GM23248 (cell line): ENCODE measurements at regions of chr2 and their contacts with region 1.

Region 1: GRCh38 chr2:177164584-177165052 is 48.0 kb upstream of the HNRNPA3 start:
- DNase-seq: peak; percentile 91
- H3K4me3 ChIP-seq: peak overlapping the region; percentile 73
- H3K27ac ChIP-seq: peak overlapping the region; percentile 72
- H3K4me1 ChIP-seq: peaks cover 32% of the 10 kb centered on the region
- H3K27me3 ChIP-seq: no peaks in the 10 kb centered on the region

Region 2: GRCh38 chr2:176415937-176416499 is 748.6 kb before region 1 on chr2:
- in situ Hi-C with region 1: no loop called
- DNase-seq: no peak
- H3K4me3 ChIP-seq: no peak overlapping the region
- H3K27ac ChIP-seq: no peak overlapping the region
- H3K4me1 ChIP-seq: peaks cover 27% of the 10 kb centered on the region
- H3K27me3 ChIP-seq: no peaks in the 10 kb centered on the region

Region 3: GRCh38 chr2:177325270-177325929 is 160.8 kb after region 1 on chr2:
- in situ Hi-C with region 1: loop called (anchors 10 kb)
- DNase-seq: peak; percentile 57
- H3K4me3 ChIP-seq: 0 out of 2 replicates have a peak overlapping the region, but pooled peaks have one; percentile 4
- H3K27ac ChIP-seq: no peak overlapping the region
- H3K4me1 ChIP-seq: peaks cover 16% of the 10 kb centered on the region
- H3K27me3 ChIP-seq: no peaks in the 10 kb centered on the region

Region 4: DNA sequence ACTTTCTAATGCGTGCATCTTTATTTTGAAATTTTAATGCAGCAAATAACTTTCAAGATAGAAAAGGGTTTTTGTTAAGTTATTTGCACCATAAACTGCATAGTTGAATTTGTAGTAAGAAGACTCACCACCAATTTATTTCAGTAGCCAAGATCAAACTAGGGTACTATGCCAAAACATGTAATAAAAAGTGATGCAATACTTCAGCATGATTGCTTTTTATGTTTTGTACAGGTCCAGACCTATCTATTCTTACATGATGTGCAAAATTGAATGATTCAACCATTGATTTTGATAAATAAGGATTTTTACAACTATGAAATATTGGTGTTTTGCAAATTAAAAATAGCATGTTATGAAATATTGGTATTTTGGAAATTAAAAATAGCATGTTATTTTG is 254.7 kb after region 1 on chr2:
- in situ Hi-C with region 1: loop called (anchors 10 kb)
- DNase-seq: peak; percentile 65
- H3K4me3 ChIP-seq: peak overlapping the region; percentile 45
- H3K27ac ChIP-seq: peak overlapping the region; percentile 12; the same call in 1 of the 2 replicates
- H3K4me1 ChIP-seq: peaks cover 45% of the 10 kb centered on the region
- H3K27me3 ChIP-seq: no peaks in the 10 kb centered on the region

Region 5: DNA sequence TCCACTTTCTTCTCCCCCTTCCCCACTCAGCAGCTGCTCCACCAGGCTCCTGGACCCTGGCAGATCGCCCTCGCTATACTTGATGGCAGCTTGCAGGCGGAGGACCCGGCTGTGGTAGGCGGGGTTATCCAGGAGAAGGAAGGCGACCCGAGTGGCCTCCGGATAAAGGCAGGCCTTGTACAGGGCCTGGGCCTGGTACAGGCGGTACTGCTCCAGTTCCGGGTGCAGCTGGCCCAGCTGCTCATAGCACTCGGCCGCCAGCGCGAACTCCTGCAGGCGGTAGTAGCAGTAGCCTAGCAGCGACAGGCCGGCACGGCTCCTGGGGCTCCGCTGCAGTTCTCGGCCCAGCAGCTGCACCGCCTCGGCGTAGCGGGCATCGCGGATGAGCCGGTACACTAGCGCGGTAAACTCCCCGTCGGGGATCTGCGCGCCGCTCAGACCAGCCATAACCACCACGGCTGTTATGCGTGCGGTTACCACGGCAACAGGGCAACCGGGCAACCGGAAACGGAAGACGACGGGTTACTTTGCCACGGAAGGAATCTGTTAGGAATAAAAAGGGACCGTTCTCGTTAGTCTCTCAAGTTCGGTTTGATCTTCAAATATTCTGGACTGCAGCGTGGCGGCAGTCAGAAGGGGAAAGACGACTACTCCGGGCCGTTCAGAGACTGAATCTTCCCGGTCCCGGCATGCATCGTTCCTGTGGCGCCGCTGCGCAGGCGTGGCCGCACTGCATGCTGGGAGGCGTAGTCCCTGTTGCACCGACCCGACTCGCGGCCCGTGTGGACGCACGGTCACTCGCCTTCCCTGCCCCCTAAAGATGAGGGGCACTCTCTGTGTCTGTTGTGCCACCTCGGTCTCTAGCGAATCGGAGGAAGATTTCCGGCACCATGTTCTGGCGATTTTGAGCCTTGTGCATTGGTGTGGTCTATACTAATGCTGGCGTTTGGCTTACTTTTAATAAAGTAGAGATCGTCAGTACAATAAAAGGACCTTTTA is 453.9 kb after region 1 on chr2:
- in situ Hi-C with region 1: loop called (anchors 25 kb)
- DNase-seq: peak; percentile 96
- H3K4me3 ChIP-seq: peak overlapping the region; percentile 90
- H3K27ac ChIP-seq: peak overlapping the region; percentile 98
- H3K4me1 ChIP-seq: no peaks in the 10 kb centered on the region
- H3K27me3 ChIP-seq: no peaks in the 10 kb centered on the region

Region 6: GRCh38 chr2:177724398-177725287 is 560.0 kb after region 1 on chr2:
- in situ Hi-C with region 1: loop called (anchors 25 kb)
- DNase-seq: peak; percentile 62
- H3K4me3 ChIP-seq: no peak overlapping the region
- H3K27ac ChIP-seq: no peak overlapping the region
- H3K4me1 ChIP-seq: no peaks in the 10 kb centered on the region
- H3K27me3 ChIP-seq: peaks cover 13% of the 10 kb centered on the region

Region 7: GRCh38 chr2:177830881-177831386 is 666.3 kb after region 1 on chr2:
- in situ Hi-C with region 1: no loop called
- DNase-seq: no peak
- H3K4me3 ChIP-seq: no peak overlapping the region
- H3K27ac ChIP-seq: no peak overlapping the region
- H3K4me1 ChIP-seq: no peaks in the 10 kb centered on the region
- H3K27me3 ChIP-seq: no peaks in the 10 kb centered on the region; the same call in 1 of the 2 replicates

Region 8: DNA sequence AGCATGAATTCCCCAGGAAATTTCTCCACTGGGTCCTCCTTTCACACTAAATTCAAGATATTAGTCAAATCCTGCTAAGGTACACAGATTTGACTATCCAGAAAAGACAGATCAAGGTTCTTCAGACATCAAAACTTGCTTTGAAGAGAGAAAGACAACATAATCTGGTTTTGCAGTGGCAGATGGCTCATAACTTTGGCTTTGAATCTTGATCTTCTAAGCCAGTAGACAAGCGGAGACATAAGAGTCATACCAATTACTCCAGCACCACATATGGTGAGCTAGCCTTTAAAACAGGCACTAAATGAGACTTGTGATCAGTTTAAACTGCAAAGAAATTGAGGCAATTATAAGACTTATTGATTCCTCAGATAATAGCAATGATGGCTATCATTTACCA is 878.6 kb after region 1 on chr2:
- in situ Hi-C with region 1: no loop called
- DNase-seq: no peak
- H3K4me3 ChIP-seq: no peak overlapping the region
- H3K27ac ChIP-seq: no peak overlapping the region
- H3K4me1 ChIP-seq: no peaks in the 10 kb centered on the region
- H3K27me3 ChIP-seq: no peaks in the 10 kb centered on the region